Calu3 (cell line): ENCODE measurements at regions of chr17 and their contacts with region 1.

Region 1: GRCh38 chr17:3004133-3004801 is 59.1 kb downstream of the OR1D5 start:
- DNase-seq: peak; percentile 98
- H3K4me3 Mint-ChIP-seq: peak overlapping the region; percentile 34
- H3K27ac Mint-ChIP-seq: peak overlapping the region; percentile 61
- H3K4me1 Mint-ChIP-seq: peaks cover 27% of the 10 kb centered on the region
- H3K27me3 Mint-ChIP-seq: no peaks in the 10 kb centered on the region
- CTCF ChIP-seq: no peak

Region 2: DNA sequence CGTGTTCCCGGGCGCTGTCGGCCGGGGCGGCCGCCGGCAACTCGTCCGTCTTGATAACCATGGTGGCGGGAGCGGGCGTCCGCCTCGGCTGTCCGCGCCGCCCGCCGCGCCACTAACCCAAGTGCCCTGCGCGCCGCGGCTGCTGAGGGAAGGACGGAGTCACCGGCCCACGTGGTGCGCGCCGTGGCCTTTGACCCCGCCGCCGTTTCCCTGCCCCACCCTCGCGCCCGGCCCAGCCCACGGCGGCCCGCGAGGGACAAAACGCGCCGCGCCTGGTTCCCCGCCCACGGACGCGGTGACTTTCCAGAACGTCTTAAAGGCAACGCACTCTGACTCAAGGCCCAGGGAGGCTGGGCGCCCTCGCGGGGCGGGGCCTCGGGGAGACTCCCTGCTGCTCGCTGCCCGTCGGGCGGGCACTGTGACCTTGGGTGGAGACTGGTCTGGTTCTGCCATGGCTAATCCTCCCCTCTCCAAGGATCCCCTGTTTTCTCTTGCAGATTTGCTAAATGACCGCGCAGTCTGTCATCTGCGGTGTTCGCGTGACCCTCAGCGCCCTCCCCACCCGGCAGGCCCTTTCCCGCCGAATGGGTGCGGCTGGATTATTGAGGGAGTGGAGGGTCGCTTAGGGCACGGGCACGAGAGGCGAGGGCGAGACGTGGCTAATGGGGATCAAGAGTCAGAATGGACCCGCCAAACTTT is 292.5 kb before region 1 on chr17 and contains the start of gene CLUH:
- CTCF ChIA-PET with region 1: no interaction called
- intact Hi-C with region 1: no loop called
- DNase-seq: peak; percentile 93
- H3K4me3 Mint-ChIP-seq: peak within 1 kb of the TSS; percentile 96
- H3K27ac Mint-ChIP-seq: peak within 1 kb of the TSS; percentile 97
- H3K4me1 Mint-ChIP-seq: peaks cover 21% of the 10 kb centered on the region
- H3K27me3 Mint-ChIP-seq: no peaks in the 10 kb centered on the region
- CTCF ChIP-seq: no peak
- total RNA-seq, gene CLUH: 103 and 113 TPM in 2 replicates

Region 3: DNA sequence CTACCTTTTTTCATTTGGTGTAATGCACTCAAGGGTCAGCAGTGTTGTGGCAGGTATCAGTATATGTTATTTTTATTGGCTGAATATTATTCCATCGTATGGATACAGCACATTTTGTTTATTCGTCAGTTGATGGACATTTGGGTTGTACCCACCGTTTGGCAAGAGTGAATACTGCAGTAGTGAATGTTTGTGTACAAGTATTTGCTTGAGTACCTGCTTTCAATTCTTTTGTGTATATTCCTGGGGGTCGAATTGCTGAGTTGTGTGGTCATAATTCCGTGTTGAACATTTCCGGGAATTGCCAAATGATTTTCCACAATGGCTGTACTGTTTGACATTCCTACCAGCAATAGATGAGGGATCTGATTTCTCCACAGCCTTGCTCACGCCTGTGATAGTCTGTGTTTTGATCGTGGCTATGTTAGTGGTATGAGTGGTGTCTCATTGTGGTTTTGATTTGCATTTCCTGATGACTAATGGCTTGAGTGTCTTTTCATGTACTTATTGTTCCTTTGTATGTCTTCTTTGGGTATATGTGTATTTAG is 49.3 kb before region 1 on chr17:
- CTCF ChIA-PET with region 1: no interaction called
- intact Hi-C with region 1: loop called (anchors 2 kb)
- DNase-seq: peak; percentile 67
- H3K4me3 Mint-ChIP-seq: peak overlapping the region; percentile 55
- H3K27ac Mint-ChIP-seq: peak overlapping the region; percentile 99
- H3K4me1 Mint-ChIP-seq: peaks cover 57% of the 10 kb centered on the region
- H3K27me3 Mint-ChIP-seq: no peaks in the 10 kb centered on the region
- CTCF ChIP-seq: no peak

Region 4: GRCh38 chr17:3030096-3030495 is 25.8 kb after region 1 on chr17:
- CTCF ChIA-PET with region 1: no interaction called
- intact Hi-C with region 1: no loop called
- DNase-seq: no peak
- H3K4me3 Mint-ChIP-seq: no peak overlapping the region
- H3K27ac Mint-ChIP-seq: no peak overlapping the region
- H3K4me1 Mint-ChIP-seq: no peaks in the 10 kb centered on the region
- H3K27me3 Mint-ChIP-seq: no peaks in the 10 kb centered on the region
- CTCF ChIP-seq: no peak